PC-3 (cell line): ENCODE measurements at regions of chr7 and their contacts with region 1.

Region 1: DNA sequence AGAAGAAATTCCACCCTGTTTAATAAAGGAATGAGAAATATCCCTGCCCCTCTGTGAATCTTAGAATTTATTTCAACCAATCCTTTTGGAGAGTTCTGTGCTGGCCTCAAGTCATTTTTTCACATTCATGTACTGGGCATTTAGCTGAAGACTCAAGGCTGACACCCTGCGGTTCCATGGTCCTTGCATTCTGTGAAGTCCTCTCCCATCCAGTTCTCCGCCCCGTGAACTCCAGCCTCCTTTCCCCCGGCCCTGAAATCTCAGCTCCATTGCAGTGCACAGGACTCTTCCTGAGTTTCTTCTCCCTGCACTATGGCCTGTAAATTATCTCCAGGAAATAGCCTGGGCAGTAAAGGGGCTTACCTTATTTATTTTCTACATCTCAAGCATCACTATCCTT is 183.0 kb upstream of the KCND2 start:
- DNase-seq: peak; percentile 65
- ATAC-seq: peak; percentile 98
- H3K4me3 ChIP-seq: no peak overlapping the region
- H3K27ac ChIP-seq: no peak overlapping the region
- H3K4me1 ChIP-seq: no peaks in the 10 kb centered on the region
- H3K27me3 ChIP-seq: no peaks in the 10 kb centered on the region
- CTCF ChIP-seq: peak; percentile 59

Region 2: GRCh38 chr7:120272261-120272660 is 182.3 kb after region 1 on chr7:
- CTCF ChIA-PET with region 1: no interaction called
- POLR2A ChIA-PET with region 1: no interaction called
- intact Hi-C with region 1: loop called (anchors 1 kb)
- DNase-seq: peak; percentile 66
- ATAC-seq: peak; percentile 67
- H3K4me3 ChIP-seq: peak overlapping the region; percentile 72
- H3K27ac ChIP-seq: no peak overlapping the region
- H3K4me1 ChIP-seq: no peaks in the 10 kb centered on the region
- H3K27me3 ChIP-seq: peaks cover 7% of the 10 kb centered on the region
- CTCF ChIP-seq: peak; percentile 86

Region 3: DNA sequence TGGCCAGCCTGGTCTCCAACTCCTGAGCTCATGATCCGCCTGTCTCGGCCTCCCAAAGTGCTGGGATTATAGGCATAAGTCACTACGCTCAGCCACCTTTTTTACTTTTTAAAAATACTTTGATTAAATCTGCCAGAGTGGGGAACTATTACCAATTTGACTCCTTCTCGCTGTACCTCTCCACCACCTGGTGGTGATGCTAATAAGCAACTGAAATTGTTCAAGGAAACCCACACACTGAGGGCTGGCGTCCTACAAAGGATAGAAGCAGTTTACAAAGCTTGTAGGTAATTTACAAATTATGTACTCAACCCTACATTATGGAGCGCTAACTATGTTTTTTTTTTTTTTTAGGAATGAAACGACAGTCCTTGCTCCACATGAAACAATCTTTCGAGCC is 1009.6 kb after region 1 on chr7:
- CTCF ChIA-PET with region 1: no interaction called
- POLR2A ChIA-PET with region 1: no interaction called
- intact Hi-C with region 1: no loop called
- DNase-seq: peak; percentile 56
- ATAC-seq: peak; percentile 61
- H3K4me3 ChIP-seq: no peak overlapping the region
- H3K27ac ChIP-seq: no peak overlapping the region
- H3K4me1 ChIP-seq: peaks cover 21% of the 10 kb centered on the region
- H3K27me3 ChIP-seq: no peaks in the 10 kb centered on the region
- CTCF ChIP-seq: peak; percentile 53; the same call in 1 of the 2 replicates